Ovary (tissue), 10 donors: ENCODE measurements at regions of chr4 and their contacts with region 1.

Region 1: GRCh38 chr4:64195582-64195981 is 213.7 kb downstream of the TECRL start:
- DNase-seq: no peak
- H3K4me3 ChIP-seq: no peak overlapping the region
- H3K27ac ChIP-seq: no peak overlapping the region
- H3K4me1 ChIP-seq: peaks cover 2% of the 10 kb centered on the region
- H3K27me3 ChIP-seq: no peaks in the 10 kb centered on the region
- CTCF ChIP-seq: no peak
- EP300 ChIP-seq: no peak
- POLR2A ChIP-seq: no peak

Region 2: DNA sequence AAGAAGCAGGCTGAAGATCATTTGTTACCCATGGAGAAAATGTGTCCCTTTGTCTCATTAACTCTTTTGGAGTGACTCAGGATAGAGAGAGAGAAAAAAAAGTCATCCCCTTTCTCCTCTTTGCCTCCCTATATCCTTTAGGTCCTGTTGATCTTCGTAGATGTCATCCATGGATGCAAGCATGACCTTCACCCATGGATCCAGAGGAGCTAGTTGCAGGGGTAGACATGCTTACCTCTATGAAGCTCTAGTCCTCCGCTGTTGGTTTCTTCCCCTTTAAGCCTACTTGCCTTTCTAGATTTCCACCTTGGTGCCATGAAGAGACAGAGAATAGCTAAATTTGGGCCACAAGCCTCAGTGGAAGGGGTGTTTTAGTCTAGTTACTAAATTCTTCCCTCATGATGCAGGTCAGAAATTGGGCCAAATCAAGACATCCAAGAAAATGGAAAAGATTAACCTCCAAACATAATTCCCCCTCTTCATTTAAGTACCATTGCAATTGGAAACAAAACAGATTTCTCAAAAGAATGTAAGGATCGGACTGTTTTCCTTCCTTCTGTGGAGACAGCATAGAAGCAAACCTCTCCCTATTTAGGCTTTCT is 35.2 kb after region 1 on chr4:
- intact Hi-C with region 1: loop called in 1 of 4 experiments (anchors 5 kb)
- DNase-seq: no peak
- H3K4me3 ChIP-seq: no peak overlapping the region
- H3K27ac ChIP-seq: no peak overlapping the region
- H3K4me1 ChIP-seq: no peaks in the 10 kb centered on the region
- H3K27me3 ChIP-seq: no peaks in the 10 kb centered on the region
- CTCF ChIP-seq: no peak
- EP300 ChIP-seq: no peak
- POLR2A ChIP-seq: no peak